Mucosa of descending colon (tissue), 3 donors: ENCODE measurements at regions of chr10 and their contacts with region 1.

Region 1: DNA sequence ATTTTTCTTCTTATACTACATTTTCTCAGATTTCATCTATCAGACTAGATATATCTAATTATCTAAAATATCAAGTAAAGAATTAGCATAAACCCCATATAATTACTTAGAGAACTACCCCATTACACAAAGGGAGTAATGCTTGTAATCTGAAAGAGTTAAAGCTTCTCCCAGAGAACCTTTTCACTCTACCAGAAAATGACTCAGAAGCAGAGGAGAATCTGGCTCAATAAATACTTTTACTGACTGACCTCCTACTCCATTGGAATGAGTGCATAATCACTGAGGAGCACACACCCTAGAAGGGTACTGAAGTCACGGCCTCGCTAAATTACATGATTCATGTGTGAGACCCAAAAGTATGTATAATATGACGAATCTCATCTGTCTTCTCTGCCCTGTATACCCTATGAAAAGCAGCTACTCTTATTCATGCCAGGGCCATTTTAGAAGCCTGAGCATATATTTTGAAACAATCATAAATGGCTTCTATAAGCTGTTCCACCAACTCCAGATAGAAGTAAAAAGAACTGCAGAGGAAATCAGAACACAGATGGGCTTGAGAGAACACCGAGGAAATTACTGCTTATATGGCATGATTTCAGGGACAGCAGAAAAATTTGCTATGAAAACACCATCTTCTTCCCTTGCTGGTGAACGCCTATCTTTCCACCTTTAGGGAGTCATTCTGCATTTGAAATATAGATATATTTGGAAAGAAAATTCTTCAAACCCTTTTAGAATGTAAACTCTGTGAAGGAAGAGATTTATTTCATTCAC is 32.7 kb downstream of the DNMBP start:
- DNase-seq: no peak
- ATAC-seq: peak; percentile 89
- H3K4me3 ChIP-seq: no peak overlapping the region
- H3K4me1 ChIP-seq: peaks cover 20% of the 10 kb centered on the region
- CTCF ChIP-seq: no peak

Region 2: GRCh38 chr10:100006220-100006886 is 29.3 kb after region 1 on chr10:
- intact Hi-C with region 1: loop called in 1 of 2 experiments (anchors 2 kb)
- DNase-seq: no peak
- ATAC-seq: peak; percentile 57
- H3K4me3 ChIP-seq: no peak overlapping the region
- H3K4me1 ChIP-seq: peaks cover 11% of the 10 kb centered on the region
- CTCF ChIP-seq: no peak